ENCODE measurements at regions of chr5 and their contacts with region 1.

Region 1: DNA sequence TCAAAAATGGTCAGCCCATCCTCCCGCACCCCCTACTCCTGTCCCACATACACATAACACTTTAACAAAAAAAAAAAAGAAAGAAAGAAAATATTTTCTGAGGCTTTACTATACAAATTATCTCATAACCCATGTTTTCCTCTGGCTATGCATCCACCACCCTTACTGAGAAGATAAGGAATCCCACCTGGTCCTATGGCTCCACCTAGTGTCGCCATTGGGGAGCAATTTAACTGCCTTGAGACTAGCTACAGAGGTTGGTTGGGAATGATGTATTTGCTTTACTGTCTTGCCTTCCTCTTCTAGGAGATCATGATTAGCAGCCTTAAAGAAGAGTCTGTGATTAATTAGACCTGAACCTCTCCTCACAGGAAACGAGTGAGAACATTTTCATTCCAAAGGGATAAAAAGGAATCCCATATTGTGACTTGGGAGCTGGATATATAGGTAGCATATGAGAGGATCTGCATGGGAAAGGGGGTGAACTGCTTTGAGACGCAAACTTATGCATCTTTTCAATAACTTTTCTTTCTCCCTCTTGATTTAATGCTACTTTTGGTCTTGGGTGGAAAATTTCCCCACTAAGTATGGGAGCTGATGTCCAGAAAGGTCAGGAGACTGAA is 77.7 kb upstream of the SELENOP start:
- DNase-seq: peak; percentile 66
- CTCF ChIP-seq: peak; percentile 90

Region 2: GRCh38 chr5:42404366-42404765 is 485.1 kb before region 1 on chr5:
- CTCF ChIA-PET with region 1: no interaction called
- POLR2A ChIA-PET with region 1: no interaction called
- DNase-seq: no peak
- CTCF ChIP-seq: no peak

Region 3: DNA sequence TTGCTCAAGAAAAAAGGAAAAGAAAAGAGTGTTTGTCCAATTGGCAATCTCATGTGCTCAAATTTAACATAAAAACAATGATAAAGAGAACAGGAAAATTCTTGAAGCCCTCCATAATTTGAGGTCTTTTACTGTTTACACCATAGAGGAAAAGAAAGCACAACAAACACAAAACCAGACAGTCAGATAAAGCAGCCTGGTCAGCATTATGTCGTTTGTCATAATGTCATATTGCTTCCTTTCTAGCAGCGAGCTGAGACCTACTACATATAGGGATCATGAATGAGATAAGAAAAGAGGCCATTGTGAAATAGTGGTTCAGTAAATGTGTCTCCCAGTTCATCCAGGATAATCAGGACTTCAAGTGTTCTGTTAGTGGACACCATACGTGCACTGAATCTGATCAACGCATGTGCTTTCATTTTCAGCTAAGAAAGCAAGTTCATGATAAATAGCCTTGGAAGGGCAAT is 13.0 kb before region 1 on chr5:
- CTCF ChIA-PET with region 1: interaction called, 25 read pairs
- POLR2A ChIA-PET with region 1: no interaction called
- DNase-seq: no peak
- CTCF ChIP-seq: no peak

Region 4: DNA sequence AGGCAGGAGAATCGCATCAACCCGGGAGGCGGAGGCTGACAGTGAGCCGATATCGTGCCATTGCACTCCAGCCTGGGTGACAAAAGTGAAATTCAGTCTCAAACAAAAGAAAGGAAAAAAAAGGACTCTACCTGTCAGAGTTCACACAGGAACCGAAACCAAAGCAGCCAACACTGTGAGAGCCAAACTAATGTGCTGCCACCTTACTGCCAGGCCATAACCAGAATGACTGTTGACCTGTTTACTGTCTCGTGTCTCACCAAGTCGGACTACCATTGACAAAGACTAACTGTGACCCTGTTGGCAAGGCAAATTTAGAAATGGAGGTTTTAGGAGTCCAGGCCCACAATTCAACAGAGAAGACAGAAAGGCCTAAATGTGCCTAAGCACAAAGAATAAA is 38.3 kb after region 1 on chr5:
- CTCF ChIA-PET with region 1: no interaction called
- POLR2A ChIA-PET with region 1: no interaction called
- DNase-seq: no peak
- CTCF ChIP-seq: no peak

Region 5: DNA sequence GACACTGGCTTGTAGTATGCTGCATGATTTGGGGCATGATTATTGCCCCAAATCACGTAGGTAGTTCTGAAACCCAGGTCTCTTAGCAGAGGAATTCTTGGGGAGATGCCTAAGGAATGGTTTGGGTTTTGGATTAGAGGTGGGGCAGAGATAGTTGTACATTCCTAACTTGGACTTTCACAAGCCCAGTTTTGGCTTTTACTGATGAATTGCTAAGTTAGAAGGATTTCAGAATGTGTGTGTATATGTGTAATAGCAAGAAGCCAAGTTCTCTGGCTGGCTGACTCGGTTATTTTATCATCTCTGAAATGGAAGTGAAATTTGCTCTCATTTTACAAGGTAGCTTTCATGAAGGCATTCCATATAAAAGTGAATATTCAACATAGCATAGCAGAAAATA is 207.5 kb after region 1 on chr5:
- CTCF ChIA-PET with region 1: no interaction called
- POLR2A ChIA-PET with region 1: no interaction called
- DNase-seq: no peak
- CTCF ChIP-seq: no peak